HEK293T (cell line): ENCODE measurements at regions of chr14 and their contacts with region 1.

Region 1: DNA sequence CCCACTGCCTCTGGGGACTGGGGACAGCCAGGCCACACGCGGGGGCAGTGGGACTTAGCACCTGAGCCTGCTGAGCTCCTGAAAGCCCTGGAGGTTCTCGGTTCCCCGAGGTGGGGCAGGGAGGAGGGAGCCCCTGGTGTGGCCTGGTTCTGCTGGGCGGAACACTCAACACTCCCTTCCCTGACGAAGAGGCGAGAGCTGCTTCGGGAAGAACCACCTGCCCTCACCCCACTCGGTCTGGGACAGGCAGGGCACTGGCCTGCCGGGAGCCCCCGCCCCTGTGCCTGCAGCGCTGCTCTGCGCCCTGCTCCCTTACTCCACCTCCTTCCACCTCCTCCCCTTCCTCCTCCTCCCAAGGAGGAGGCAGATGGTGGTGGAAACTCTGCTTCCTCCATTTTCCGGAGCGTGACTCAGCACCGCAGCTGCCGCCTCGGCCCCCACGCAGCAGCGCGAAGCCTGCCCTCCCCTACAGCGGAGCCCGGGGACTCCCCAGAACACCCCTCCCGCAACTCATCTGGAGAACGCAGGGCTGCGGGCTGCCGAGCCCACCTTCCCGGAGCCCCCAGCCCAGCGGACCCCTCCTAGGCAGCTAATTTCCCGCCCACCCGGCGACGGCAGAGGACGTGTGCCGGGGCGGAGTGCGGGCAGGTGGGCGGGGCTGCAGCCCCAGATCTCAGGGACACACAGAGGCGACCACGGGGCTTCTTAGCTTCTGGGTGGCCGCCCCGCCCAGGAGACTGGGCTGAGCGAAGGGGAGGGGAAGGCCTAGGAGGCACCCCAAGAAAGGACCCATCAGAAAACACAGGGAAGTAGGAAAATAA is 11.7 kb upstream of the INF2 start:
- DNase-seq: peak; percentile 74

Region 2: GRCh38 chr14:104689109-104689880 is 11.6 kb after region 1 on chr14 and contains the start of gene INF2:
- CTCF ChIA-PET with region 1: interaction called, 3 read pairs
- POLR2A ChIA-PET with region 1: interaction called, 21 read pairs
- DNase-seq: peak; percentile 77

Region 3: GRCh38 chr14:104843442-104844305 is 166.0 kb after region 1 on chr14:
- CTCF ChIA-PET with region 1: no interaction called
- POLR2A ChIA-PET with region 1: no interaction called
- DNase-seq: no peak